Breast epithelium (tissue), 4 donors: ENCODE measurements at regions of chr3 and their contacts with region 1.

Region 1: DNA sequence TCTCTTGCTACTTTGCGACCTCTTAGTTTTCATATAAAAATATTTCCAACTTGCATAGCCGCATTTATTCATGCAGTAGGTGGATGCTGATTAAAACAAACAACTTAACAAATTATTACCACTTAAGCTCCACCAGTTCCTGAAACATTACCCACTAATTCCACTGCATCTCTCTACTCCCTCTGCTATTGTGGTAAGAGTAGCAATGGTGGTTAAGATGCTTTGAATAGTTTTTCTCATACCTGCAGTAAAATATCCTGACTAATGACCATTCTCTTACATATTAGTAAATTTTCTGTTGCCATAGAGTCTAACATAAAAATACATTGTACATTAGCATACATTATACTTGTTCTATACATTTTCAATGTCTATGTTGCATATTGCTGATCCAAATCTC is 397.6 kb upstream of the PLSCR5 start:
- DNase-seq: no peak
- H3K4me3 ChIP-seq: no peak overlapping the region
- H3K27ac ChIP-seq: no peak overlapping the region
- H3K4me1 ChIP-seq: no peaks in the 10 kb centered on the region
- H3K27me3 ChIP-seq: no peaks in the 10 kb centered on the region
- CTCF ChIP-seq: no peak
- POLR2A ChIP-seq: no peak

Region 2: GRCh38 chr3:145952536-145952935 is 1050.2 kb before region 1 on chr3:
- intact Hi-C with region 1: loop called (anchors 5 kb)
- DNase-seq: no peak
- H3K4me3 ChIP-seq: no peak overlapping the region
- H3K27ac ChIP-seq: no peak overlapping the region
- H3K4me1 ChIP-seq: no peaks in the 10 kb centered on the region
- H3K27me3 ChIP-seq: no peaks in the 10 kb centered on the region
- CTCF ChIP-seq: no peak
- POLR2A ChIP-seq: no peak

Region 3: GRCh38 chr3:146682171-146682570 is 320.6 kb before region 1 on chr3:
- intact Hi-C with region 1: no loop called
- DNase-seq: no peak
- H3K4me3 ChIP-seq: no peak overlapping the region
- H3K27ac ChIP-seq: no peak overlapping the region
- H3K4me1 ChIP-seq: no peaks in the 10 kb centered on the region
- H3K27me3 ChIP-seq: no peaks in the 10 kb centered on the region
- CTCF ChIP-seq: no peak
- POLR2A ChIP-seq: no peak

Region 4: GRCh38 chr3:148903022-148903442 is 1900.3 kb after region 1 on chr3:
- intact Hi-C with region 1: no loop called
- DNase-seq: no peak
- H3K4me3 ChIP-seq: no peak overlapping the region
- H3K27ac ChIP-seq: no peak overlapping the region
- H3K4me1 ChIP-seq: no peaks in the 10 kb centered on the region
- H3K27me3 ChIP-seq: no peaks in the 10 kb centered on the region
- CTCF ChIP-seq: no peak
- POLR2A ChIP-seq: no peak